GM23248 (cell line): ENCODE measurements at regions of chr20 and their contacts with region 1.

Region 1: DNA sequence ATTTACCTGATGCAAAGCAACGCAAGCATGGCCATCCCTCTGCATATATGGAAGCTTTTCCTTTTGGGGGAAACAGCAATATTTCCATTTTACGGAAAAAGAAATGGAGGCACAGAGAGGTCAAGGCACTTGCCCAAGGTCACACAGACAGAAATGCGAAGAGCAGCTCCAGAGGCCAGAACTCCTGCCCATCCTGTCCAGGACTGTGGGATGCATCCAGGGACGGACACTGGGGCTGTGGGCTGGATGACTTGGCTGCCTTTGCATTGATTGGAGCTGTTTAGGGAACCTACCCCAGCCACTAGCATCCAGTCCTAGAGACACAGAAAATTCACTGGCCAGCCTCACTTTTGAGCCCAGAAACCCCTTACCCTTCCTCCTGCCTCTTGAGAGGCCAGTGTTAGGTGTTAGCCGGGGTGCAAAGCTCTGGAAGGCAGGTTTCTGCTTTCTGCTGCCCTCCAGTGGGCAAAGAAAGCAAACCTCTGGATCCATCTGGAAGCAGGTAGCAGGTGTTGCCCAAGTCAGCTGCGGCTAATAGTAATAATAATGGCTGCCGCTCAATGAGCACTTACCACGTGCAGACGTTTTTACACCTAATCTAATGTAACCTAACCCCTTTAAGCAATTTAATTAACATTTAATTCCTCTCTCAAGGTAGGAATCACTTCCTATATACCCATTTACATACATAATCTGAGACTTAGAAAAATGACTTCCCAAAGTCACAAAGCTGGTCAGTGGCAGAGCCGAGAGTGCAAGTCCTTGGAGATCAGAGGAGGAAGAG is 31.7 kb upstream of the CCN5 start:
- DNase-seq: peak; percentile 74
- H3K4me3 ChIP-seq: no peak overlapping the region
- H3K27ac ChIP-seq: no peak overlapping the region
- H3K4me1 ChIP-seq: 0 out of 2 replicates have a peak, but pooled peaks cover 3% of the 10 kb centered on the region
- H3K27me3 ChIP-seq: no peaks in the 10 kb centered on the region

Region 2: DNA sequence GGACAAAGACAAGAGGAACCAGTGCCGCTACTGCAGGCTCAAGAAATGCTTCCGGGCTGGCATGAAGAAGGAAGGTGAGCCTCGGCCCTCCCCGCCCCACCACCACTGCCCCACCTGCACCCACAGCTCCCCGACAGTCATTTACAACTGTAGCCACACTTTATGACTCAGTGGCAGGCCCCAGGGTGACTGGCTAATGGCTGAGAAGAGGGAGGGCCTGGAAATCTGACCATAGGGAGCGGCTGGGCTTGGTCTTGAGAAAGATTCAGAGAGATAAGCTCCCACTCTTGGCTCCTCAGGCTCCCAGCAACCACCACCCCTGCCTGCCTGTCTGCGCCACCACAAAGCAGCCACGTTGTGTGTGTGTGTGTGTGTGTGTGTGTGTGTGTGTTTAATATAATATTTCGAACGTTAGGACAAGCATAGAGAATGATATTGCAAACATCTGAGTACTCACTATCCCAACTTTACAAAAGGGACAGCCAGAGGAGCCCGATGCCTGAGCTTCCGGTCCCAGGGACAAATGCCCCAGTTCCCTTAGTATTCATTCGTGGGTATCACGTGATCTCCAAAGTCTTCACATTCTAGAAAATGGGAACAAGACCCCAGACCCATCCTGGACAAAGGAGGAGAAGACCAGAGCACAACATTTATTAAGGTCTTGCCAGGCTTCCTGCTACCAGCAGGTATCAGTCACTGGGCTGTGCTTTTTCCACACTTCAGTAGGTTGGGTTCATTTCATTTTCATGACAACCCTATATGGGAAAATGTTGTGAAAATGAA is 275.9 kb before region 1 on chr20:
- in situ Hi-C with region 1: no loop called
- DNase-seq: peak; percentile 78
- H3K4me3 ChIP-seq: no peak overlapping the region
- H3K27ac ChIP-seq: no peak overlapping the region
- H3K4me1 ChIP-seq: peaks cover 14% of the 10 kb centered on the region
- H3K27me3 ChIP-seq: peaks cover 14% of the 10 kb centered on the region

Region 3: DNA sequence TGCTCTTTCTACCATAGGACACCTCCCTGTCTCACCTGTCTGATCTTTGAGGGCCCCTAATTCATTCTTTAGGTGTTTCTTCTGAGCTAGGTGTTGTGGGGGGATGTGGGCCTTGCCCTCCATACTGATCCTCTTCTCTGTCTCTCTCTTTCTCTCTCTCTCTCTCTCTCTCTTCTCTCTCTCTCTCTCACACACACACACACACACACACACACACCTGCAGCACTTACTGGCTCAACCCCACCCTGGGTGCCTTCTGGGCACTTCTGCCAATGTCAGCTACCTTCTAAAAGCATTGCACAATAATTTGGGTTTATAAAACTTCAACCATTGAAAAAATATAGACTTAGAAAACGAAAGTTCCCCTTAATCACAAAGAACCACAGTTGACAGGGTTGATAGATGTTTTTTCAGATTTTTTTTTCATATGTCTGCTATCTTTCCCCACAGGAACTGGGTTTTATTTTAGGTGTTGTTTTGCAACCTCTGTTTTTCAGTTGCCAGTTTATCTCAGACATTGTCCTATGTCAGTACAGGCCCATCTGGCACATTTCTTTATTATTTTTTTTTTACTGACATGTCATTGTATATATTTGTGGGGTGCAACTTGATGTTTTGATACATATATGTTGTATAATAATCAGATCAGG is 73.0 kb before region 1 on chr20:
- in situ Hi-C with region 1: no loop called
- DNase-seq: no peak
- H3K4me3 ChIP-seq: no peak overlapping the region
- H3K27ac ChIP-seq: no peak overlapping the region
- H3K4me1 ChIP-seq: peaks cover 12% of the 10 kb centered on the region
- H3K27me3 ChIP-seq: no peaks in the 10 kb centered on the region

Region 4: GRCh38 chr20:44733341-44734069 is 50.0 kb after region 1 on chr20:
- in situ Hi-C with region 1: loop called (anchors 5 kb)
- DNase-seq: peak; percentile 87
- H3K4me3 ChIP-seq: no peak overlapping the region
- H3K27ac ChIP-seq: no peak overlapping the region
- H3K4me1 ChIP-seq: peaks cover 43% of the 10 kb centered on the region
- H3K27me3 ChIP-seq: no peaks in the 10 kb centered on the region

Region 5: GRCh38 chr20:44861531-44862006 is 178.1 kb after region 1 on chr20:
- in situ Hi-C with region 1: loop called (anchors 10 kb)
- DNase-seq: peak; percentile 88
- H3K4me3 ChIP-seq: no peak overlapping the region
- H3K27ac ChIP-seq: peak overlapping the region; percentile 65
- H3K4me1 ChIP-seq: peaks cover 29% of the 10 kb centered on the region
- H3K27me3 ChIP-seq: no peaks in the 10 kb centered on the region